ENCODE measurements at regions of chr19 and their contacts with region 1.

Region 1: DNA sequence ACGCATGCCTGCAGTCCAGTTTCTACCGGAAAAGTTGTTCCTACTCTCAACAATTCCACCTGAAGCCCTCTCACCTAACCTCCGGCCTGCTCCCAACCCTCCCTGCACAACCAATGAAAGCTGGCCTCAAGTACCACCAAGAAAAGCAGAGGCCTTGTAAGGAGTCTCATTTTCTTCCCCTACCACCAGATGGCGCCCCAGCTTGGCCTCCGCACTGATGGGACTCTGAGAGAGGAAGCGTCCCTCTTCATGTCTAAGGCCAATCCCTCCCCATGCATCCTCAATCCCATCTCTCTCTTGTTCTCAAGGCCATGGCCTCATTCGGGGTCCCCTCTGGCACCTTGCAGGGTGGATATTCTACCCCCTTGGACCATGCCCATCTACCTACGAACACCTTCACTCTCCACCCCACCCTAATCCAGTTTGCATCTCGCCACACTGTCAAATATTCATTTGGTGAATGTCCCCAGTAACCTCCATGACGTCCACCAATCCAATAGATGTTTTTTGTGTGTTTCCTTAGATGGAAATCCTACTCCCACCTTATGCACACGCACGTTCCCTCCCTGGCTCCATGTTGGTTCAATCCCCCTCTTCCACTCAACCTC is 412.8 kb downstream of the ZNF536 start:
- DNase-seq: peak; percentile 42 to 51
- ATAC-seq: peak in 1 of 2 experiments; percentile 83; a peak in 3 of 6 replicates
- H3K4me3 ChIP-seq: no peak overlapping the region
- H3K27ac ChIP-seq: no peak overlapping the region
- H3K4me1 ChIP-seq: no peaks in the 10 kb centered on the region
- CTCF ChIP-seq: peak; percentile 40; the same call in 2 of the 3 replicates
- EP300 ChIP-seq: no peak
- POLR2A ChIP-seq: no peak
- RAD21 ChIP-seq: peak; percentile 41 to 54; a peak in 4 of 5 replicates

Region 2: DNA sequence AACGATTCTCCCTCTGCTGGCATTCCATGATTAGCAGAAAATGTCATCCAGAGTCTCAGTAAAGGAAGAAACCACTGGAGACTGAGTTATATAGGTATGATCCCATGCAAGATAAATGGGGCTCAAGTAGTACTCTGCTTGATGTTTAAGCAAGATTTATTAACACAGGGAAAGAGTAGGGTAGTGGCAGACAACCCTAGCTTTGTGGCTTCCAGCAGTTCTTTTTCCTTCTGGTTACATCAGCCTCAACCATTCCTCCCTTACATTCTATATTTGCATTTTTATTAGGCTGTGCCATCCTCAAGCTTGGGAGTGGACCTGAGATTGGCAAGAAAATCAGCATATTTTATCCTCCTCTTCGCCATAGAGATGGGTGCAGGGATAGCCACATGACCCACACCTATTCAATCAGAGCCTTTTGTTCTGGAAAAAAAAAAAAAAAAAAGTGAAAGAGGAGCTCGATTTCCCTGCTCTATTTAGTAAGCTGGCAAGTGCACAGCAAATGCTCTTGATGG is 10.6 kb before region 1 on chr19:
- CTCF ChIA-PET with region 1: interaction called, 10 read pairs
- POLR2A ChIA-PET with region 1: no interaction called
- DNase-seq: no peak
- ATAC-seq: no peak
- H3K4me3 ChIP-seq: no peak overlapping the region
- H3K27ac ChIP-seq: no peak overlapping the region
- H3K4me1 ChIP-seq: no peaks in the 10 kb centered on the region
- CTCF ChIP-seq: no peak
- EP300 ChIP-seq: no peak
- POLR2A ChIP-seq: no peak
- RAD21 ChIP-seq: no peak

Region 3: GRCh38 chr19:30799865-30800755 is 15.2 kb after region 1 on chr19:
- CTCF ChIA-PET with region 1: interaction called, 20 read pairs
- POLR2A ChIA-PET with region 1: no interaction called
- DNase-seq: peak; percentile 38 to 83
- ATAC-seq: peak; percentile 61 to 94; a peak in 4 of 6 replicates
- H3K4me3 ChIP-seq: no peak overlapping the region
- H3K27ac ChIP-seq: no peak overlapping the region
- H3K4me1 ChIP-seq: no peaks in the 10 kb centered on the region
- CTCF ChIP-seq: peak; percentile 56
- EP300 ChIP-seq: no peak
- POLR2A ChIP-seq: no peak
- RAD21 ChIP-seq: peak; percentile 32 to 56; a peak in 4 of 5 replicates